Heart right ventricle (tissue), 16 donors: ENCODE measurements at regions of chrX and their contacts with region 1.

Region 1: DNA sequence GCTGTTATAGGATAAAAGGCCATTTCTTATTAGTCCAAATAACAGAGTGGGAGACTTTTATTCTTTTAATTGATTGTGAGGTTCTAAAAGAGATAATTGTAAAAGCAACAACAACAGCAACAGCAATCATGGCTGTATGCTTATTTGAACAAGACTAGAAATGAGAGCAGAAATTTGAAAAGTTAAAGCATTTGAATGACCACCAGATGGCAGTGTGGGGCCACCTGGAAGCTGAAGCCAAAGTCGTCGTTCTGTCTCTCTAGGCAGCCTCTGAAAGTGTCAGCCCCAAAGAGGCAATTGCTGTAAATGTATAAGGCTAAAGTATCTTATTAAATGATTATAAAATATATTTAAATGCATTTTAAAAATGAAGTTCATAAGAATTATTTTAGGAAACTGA is 42.2 kb downstream of the SH2D1A start:
- DNase-seq: peak; percentile 16 to 26
- ATAC-seq: peak in 1 of 8 donors; percentile 39
- H3K4me3 ChIP-seq: no peak overlapping the region
- H3K27ac ChIP-seq: no peak overlapping the region
- H3K4me1 ChIP-seq: no peaks in the 10 kb centered on the region
- H3K27me3 ChIP-seq: peaks cover 0 to 24% (median 0%) of the 10 kb centered on the region in 7 donors
- CTCF ChIP-seq: peak; percentile 31 to 83 (median 63)

Region 2: GRCh38 chrX:124211312-124211942 is 177.1 kb before region 1 on chrX:
- intact Hi-C with region 1: loop called in 1 of 10 experiments (anchors 10 kb)
- DNase-seq: no peak
- ATAC-seq: peak in 2 of 8 donors; percentile 47
- H3K4me3 ChIP-seq: no peak overlapping the region
- H3K27ac ChIP-seq: no peak overlapping the region
- H3K4me1 ChIP-seq: peaks cover 0 to 4% (median 0%) of the 10 kb centered on the region in 9 donors
- H3K27me3 ChIP-seq: no peaks in the 10 kb centered on the region
- CTCF ChIP-seq: peak in 8 of 9 donors; percentile 19 to 65 (median 54)

Region 3: GRCh38 chrX:124325732-124326131 is 62.8 kb before region 1 on chrX:
- intact Hi-C with region 1: no loop called
- DNase-seq: no peak
- ATAC-seq: no peak
- H3K4me3 ChIP-seq: no peak overlapping the region
- H3K27ac ChIP-seq: no peak overlapping the region
- H3K4me1 ChIP-seq: no peaks in the 10 kb centered on the region
- H3K27me3 ChIP-seq: peaks cover 0 to 3% (median 0%) of the 10 kb centered on the region in 7 donors
- CTCF ChIP-seq: no peak

Region 4: DNA sequence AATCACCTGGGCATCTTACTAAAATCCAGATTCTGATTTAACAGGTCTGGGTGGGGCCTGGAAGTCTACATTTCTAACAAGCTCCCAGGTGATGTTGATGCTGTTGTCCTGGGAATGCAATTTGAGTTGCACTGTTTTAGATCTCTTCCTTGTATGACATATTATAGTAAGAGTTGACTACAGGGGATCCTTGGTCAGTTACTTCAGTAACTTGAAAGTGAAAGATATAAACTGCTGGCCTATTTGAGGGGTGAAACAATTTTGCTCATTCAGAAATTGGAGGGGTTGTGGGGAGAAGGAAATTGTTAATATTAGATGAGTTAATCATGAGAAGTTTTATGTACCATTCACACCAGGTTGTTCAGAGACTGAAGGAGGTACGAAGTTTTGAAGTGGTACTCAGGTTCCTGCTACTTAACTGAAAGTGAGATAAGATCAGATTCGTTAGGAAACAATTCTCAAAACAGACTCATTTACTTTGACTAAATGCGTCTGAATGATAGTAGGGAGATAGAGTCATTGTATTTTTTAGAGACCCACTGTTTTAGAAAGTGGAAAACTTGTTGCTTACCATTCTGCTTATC is 29.7 kb before region 1 on chrX:
- intact Hi-C with region 1: loop called in 1 of 10 experiments (anchors 1 kb)
- DNase-seq: no peak
- ATAC-seq: no peak
- H3K4me3 ChIP-seq: no peak overlapping the region
- H3K27ac ChIP-seq: no peak overlapping the region
- H3K4me1 ChIP-seq: peaks cover 0 to 4% (median 0%) of the 10 kb centered on the region in 9 donors
- H3K27me3 ChIP-seq: no peaks in the 10 kb centered on the region
- CTCF ChIP-seq: no peak